ENCODE measurements at regions of chrX and their contacts with region 1.

Region 1: GRCh38 chrX:136708348-136708747 is 60.4 kb downstream of the CD40LG start:
- DNase-seq: no peak
- ATAC-seq: peak; percentile 48

Region 2: GRCh38 chrX:136468391-136469103 is 239.8 kb before region 1 on chrX:
- intact Hi-C with region 1: no loop called
- DNase-seq: no peak
- ATAC-seq: no peak

Region 3: GRCh38 chrX:136909706-136910564 is 201.6 kb after region 1 on chrX:
- intact Hi-C with region 1: loop called (anchors 10 kb)
- DNase-seq: peak; percentile 76
- ATAC-seq: peak; percentile 85

Region 4: GRCh38 chrX:136999024-136999423 is 290.7 kb after region 1 on chrX:
- intact Hi-C with region 1: no loop called
- DNase-seq: no peak
- ATAC-seq: no peak

Measured in Right ventricle myocardium superior (tissue), 1 donor.